PC-9 (cell line): ENCODE measurements at regions of chr15 and their contacts with region 1.

Region 1: GRCh38 chr15:70806992-70807712 is 43.8 kb upstream of the UACA start:
- DNase-seq: no peak
- H3K4me3 ChIP-seq: no peak overlapping the region
- H3K27ac ChIP-seq: no peak overlapping the region
- H3K4me1 ChIP-seq: no peaks in the 10 kb centered on the region
- H3K27me3 ChIP-seq: no peaks in the 10 kb centered on the region
- CTCF ChIP-seq: no peak

Region 2: DNA sequence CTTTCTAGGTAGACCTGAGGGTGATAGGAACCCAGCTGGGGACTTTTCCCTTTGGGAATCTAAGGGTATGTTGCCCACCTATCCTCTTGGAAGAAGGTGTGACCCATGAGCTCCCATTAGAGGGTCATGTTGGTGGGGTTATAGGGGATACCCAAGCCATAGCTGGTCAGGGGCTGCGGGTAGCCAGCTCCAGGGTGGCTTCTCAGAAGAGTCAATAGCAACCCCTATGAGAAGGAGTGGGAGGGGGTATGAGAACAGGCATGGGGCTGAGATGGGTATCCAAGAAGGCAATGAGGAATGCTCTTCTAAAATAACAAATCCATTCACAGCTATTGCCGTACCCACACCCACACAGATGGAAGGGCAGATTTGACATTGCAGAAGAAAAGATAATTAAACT is 261.6 kb before region 1 on chr15:
- CTCF ChIA-PET with region 1: no interaction called
- POLR2A ChIA-PET with region 1: no interaction called
- intact Hi-C with region 1: no loop called
- DNase-seq: no peak
- H3K4me3 ChIP-seq: no peak overlapping the region
- H3K27ac ChIP-seq: no peak overlapping the region
- H3K4me1 ChIP-seq: no peaks in the 10 kb centered on the region
- H3K27me3 ChIP-seq: no peaks in the 10 kb centered on the region
- CTCF ChIP-seq: no peak

Region 3: GRCh38 chr15:70722266-70723121 is 84.7 kb before region 1 on chr15:
- CTCF ChIA-PET with region 1: interaction called, 11 read pairs
- POLR2A ChIA-PET with region 1: no interaction called
- intact Hi-C with region 1: no loop called
- DNase-seq: no peak
- H3K4me3 ChIP-seq: no peak overlapping the region
- H3K27ac ChIP-seq: no peak overlapping the region
- H3K4me1 ChIP-seq: no peaks in the 10 kb centered on the region
- H3K27me3 ChIP-seq: no peaks in the 10 kb centered on the region
- CTCF ChIP-seq: peak; percentile 81

Region 4: DNA sequence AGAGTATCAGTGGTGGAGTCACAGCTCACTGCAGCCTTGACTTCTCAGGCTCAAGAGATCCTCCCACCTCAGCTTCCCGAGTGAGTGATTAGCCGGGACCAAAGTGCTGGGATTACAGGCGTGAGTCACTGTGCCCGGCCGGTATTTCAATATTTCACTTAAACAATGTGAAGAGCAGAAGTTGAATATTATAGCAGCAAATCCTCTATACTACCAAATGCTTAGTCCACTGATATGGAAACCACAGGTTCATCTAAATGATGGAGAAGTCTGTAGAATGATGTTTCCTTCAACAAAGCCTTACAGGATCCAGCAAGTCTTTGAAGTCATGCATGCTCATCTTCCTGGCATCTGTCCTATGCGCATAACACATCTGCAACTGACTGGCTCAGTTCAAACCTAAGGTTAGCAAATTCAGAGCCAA is 23.5 kb before region 1 on chr15:
- CTCF ChIA-PET with region 1: interaction called, 17 read pairs
- POLR2A ChIA-PET with region 1: no interaction called
- intact Hi-C with region 1: no loop called
- DNase-seq: peak; percentile 46 to 68
- H3K4me3 ChIP-seq: no peak overlapping the region
- H3K27ac ChIP-seq: peak overlapping the region; percentile 37; the same call in 1 of the 2 replicates
- H3K4me1 ChIP-seq: peaks cover 52% of the 10 kb centered on the region
- H3K27me3 ChIP-seq: no peaks in the 10 kb centered on the region
- CTCF ChIP-seq: no peak

Region 5: DNA sequence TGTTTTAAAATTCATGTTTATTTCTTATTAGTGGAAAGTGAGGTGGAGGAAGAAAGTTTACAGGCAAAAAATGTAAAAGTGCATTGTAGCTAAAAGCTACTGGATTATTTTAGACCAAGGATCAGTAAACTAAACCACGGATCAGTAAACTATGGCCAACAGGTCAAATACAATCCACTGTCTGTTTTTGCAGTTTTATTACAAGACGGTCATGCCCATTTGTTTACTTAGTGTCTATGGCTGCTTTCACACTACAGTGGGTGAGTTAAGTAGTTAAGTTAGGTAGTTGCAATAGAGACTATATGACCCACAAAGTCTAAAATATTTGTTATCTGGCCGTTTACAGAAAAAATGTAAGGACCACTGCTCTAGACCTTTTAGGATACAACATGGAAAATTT is 1085.2 kb after region 1 on chr15:
- CTCF ChIA-PET with region 1: interaction called, 14 read pairs
- POLR2A ChIA-PET with region 1: no interaction called
- intact Hi-C with region 1: no loop called
- DNase-seq: no peak
- H3K4me3 ChIP-seq: no peak overlapping the region
- H3K27ac ChIP-seq: no peak overlapping the region
- H3K4me1 ChIP-seq: no peaks in the 10 kb centered on the region
- H3K27me3 ChIP-seq: no peaks in the 10 kb centered on the region
- CTCF ChIP-seq: no peak